Posterior cingulate gyrus (tissue), 11 donors: ENCODE measurements at regions of chr13 and their contacts with region 1.

Region 1: DNA sequence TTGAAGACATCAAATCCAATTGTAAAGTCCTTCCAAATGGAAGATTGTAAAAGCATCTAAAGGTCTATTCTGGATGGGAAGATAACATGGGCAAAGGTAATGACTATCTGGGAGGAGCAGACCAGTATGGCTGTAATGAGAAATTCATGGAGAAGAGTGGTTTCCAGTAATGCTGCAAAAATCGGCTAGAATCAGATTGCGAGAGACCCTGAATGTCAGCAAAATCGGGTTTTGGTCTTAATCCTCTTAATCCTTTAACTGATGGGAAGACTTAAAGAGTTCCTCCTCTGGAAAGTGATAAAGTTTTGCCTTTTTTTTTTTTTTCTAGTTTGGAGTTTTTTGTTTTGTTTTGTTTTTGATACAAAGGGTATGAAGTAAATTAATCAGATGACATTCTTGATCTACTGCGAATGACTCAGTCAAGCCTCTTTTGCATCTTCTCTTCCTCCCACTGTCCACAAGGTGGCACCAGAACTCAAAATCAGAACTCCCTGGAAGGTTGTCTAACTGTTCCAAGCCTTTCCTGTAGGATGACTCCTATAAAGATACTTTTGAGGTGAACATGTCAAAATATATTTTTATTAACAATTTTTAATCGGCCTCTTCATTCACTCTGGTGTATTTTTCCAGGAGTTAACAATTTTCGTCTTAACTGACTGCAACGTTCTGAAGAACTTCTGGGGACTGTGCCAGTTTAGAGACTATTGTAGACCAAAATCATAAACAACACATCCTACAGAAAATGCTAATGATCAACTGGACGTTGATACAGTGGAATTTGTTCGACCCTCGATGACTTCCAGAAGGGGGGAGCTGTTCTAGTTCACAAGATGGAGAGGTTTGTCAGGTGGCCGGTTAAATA is 213.3 kb upstream of the MIR17HG start:
- DNase-seq: peak in 6 of 10 donors; percentile 9 to 81 (median 53)

Region 2: DNA sequence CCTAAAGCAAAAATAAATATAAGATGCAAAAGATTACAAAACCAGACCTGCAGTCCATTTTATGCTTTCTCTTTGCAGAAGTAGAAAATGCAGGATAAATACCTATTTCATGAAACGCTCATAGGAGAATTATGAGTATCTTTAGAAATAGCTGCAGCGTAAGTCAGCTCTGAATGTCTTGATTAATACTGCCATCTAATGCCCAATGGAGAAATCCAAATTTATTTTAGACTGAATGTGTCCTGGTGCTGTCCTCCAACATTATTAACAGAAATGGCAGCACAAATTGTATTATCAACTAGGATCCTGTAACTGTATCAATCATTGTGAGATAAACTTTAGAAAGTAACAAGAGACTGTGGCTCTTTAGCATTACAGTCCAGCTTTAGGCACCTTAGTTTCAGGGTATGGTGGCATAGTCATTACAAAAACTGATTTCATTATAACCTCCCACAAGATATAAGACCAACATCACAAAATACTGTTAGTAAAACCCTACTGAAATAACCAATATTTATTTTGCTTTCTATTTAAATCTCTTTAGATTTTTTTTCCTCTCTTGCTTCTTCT is 51.2 kb after region 1 on chr13:
- intact Hi-C with region 1: loop called (anchors 1 kb)
- DNase-seq: no peak

Region 3: GRCh38 chr13:91247768-91248167 is 113.6 kb after region 1 on chr13:
- intact Hi-C with region 1: loop called (anchors 2 kb)
- DNase-seq: no peak

Region 4: GRCh38 chr13:91331047-91331915 is 197.1 kb after region 1 on chr13:
- intact Hi-C with region 1: no loop called
- DNase-seq: no peak